Activated CD4-positive, alpha-beta T cell treated with anti-CD3 and anti-CD28 coated beads for 36 hours (primary cell): ENCODE measurements at regions of chr2 and their contacts with region 1.

Region 1: DNA sequence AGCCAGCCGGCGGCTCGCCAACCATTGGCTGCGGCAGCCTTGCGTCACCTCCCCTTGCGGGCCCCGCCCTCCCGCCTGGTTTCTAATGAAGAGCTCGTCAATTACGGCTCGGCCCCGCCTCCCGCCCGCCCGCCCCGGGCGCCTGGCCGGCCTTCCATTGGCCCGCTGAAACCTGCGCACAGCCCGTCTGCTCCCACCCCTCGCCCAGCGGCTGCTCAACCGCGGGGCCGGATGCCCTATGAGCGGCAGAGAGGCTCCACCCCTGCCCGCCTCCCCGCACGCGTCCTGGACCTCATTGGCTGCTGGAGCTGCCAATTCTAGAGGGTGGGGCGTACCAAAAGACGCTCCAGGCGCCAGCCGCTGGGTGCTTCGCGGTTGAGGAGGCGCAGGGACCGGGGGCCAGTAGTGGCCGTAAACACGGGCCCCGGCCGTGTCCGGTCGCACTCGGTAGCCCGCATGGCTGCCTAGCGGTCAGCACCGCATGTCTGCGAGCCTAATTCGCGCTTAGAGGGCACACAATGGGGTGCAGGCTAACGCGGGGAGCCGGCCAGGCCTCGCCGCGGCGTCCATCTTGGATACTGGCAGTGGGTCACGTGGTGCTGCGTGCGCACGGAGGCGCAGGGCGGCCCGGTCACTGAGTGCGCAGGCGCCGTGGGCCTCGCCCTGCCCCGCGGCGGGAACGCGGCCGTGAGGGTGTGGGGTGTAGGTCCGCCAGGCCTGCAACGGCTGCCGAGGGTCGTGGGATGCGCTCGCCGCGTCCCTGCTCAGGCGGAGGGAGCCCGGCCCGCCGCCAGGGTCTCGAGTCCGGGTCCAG is 454 bp upstream of the HDAC4 start:
- DNase-seq: peak; percentile 99
- ATAC-seq: peak; percentile 93
- H3K4me3 Mint-ChIP-seq: peak overlapping the region; percentile 88
- H3K27ac Mint-ChIP-seq: peak overlapping the region; percentile 97
- H3K4me1 Mint-ChIP-seq: peaks cover 41% of the 10 kb centered on the region
- H3K27me3 Mint-ChIP-seq: peaks cover 2% of the 10 kb centered on the region

Region 2: GRCh38 chr2:239143858-239144718 is 257.2 kb before region 1 on chr2:
- CTCF ChIA-PET with region 1: interaction called, 4 read pairs
- POLR2A ChIA-PET with region 1: no interaction called
- intact Hi-C with region 1: loop called (anchors 5 kb)
- DNase-seq: peak; percentile 53
- ATAC-seq: peak; percentile 65
- H3K4me3 Mint-ChIP-seq: no peak overlapping the region
- H3K27ac Mint-ChIP-seq: no peak overlapping the region
- H3K4me1 Mint-ChIP-seq: peaks cover 3% of the 10 kb centered on the region
- H3K27me3 Mint-ChIP-seq: no peaks in the 10 kb centered on the region

Region 3: DNA sequence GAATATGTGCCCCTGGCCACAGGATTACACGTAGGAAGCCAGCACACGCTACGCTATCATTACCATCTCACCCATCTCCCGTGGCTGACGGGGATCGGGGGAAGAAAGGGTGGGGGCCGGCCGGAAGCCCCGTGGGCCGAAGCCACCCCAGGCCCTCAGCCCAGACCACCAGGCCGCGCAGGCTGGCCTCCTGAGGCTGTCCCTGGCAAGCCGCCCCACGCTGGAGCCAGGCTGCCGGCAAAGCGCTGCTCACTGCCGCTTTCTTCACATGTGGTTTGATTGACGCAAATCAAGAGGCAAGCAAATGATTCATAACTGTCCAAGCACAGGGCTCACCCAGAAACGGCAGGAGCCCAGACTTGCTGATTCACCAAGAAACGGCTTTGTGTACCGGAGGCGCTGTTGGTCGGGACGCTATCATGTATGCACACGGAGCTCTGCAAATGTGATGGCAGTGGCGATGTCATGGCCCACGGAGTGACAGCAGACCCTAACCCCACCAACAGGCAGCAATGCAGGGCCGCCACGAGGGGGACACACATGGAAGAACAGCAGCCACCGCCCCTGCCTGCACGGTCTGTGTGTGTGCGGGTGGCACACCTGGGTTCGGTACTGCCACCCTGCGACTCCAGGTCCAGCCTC is 126.1 kb before region 1 on chr2:
- CTCF ChIA-PET with region 1: no interaction called
- POLR2A ChIA-PET with region 1: interaction called, 5 read pairs
- intact Hi-C with region 1: loop called in 1 of 2 experiments (anchors 1 kb)
- DNase-seq: peak; percentile 91
- ATAC-seq: peak; percentile 89
- H3K4me3 Mint-ChIP-seq: peak overlapping the region; percentile 53
- H3K27ac Mint-ChIP-seq: peak overlapping the region; percentile 83
- H3K4me1 Mint-ChIP-seq: peaks cover 46% of the 10 kb centered on the region
- H3K27me3 Mint-ChIP-seq: peaks cover 31% of the 10 kb centered on the region

Region 4: GRCh38 chr2:239358062-239358754 is 43.1 kb before region 1 on chr2:
- CTCF ChIA-PET with region 1: no interaction called
- POLR2A ChIA-PET with region 1: no interaction called
- intact Hi-C with region 1: no loop called
- DNase-seq: no peak
- ATAC-seq: no peak
- H3K4me3 Mint-ChIP-seq: no peak overlapping the region
- H3K27ac Mint-ChIP-seq: no peak overlapping the region
- H3K4me1 Mint-ChIP-seq: no peaks in the 10 kb centered on the region
- H3K27me3 Mint-ChIP-seq: no peaks in the 10 kb centered on the region

Region 5: DNA sequence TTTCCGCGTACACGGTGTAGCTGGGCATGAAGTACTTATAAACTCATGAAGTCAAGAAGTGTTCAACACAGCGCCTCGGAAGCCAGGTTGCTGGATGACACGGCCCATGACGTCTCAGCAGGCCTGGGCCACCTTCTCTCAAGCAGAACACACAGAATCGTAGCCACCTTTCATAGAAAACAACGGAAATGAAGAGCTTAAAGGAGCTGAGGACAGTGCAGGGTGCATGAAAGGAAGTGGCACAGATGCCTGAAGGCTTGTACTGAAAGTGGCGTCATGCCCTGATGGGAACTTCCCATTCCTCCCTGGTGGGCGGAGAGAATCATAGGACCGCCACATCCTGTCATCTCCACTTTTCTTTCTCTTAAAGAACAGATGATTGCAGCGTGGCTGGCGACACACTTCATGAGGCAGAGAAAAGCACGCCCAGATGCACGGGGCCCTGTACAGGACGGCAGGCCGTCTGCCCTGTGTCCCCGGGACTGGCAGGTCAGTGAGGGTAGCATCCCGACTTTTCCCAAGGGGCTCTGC is 31.6 kb before region 1 on chr2:
- CTCF ChIA-PET with region 1: interaction called, 3 read pairs
- POLR2A ChIA-PET with region 1: interaction called, 4 read pairs
- intact Hi-C with region 1: loop called (anchors 1 kb)
- DNase-seq: peak; percentile 91
- ATAC-seq: peak; percentile 97
- H3K4me3 Mint-ChIP-seq: peak overlapping the region; percentile 70
- H3K27ac Mint-ChIP-seq: peak overlapping the region; percentile 90
- H3K4me1 Mint-ChIP-seq: peaks cover 8% of the 10 kb centered on the region
- H3K27me3 Mint-ChIP-seq: no peaks in the 10 kb centered on the region

Region 6: GRCh38 chr2:239544143-239544917 is 143.1 kb after region 1 on chr2:
- CTCF ChIA-PET with region 1: no interaction called
- POLR2A ChIA-PET with region 1: no interaction called
- intact Hi-C with region 1: loop called in 1 of 2 experiments (anchors 1 kb)
- DNase-seq: peak; percentile 4
- ATAC-seq: no peak
- H3K4me3 Mint-ChIP-seq: no peak overlapping the region
- H3K27ac Mint-ChIP-seq: peak overlapping the region; percentile 83
- H3K4me1 Mint-ChIP-seq: peaks cover 50% of the 10 kb centered on the region
- H3K27me3 Mint-ChIP-seq: peaks cover 7% of the 10 kb centered on the region

Region 7: DNA sequence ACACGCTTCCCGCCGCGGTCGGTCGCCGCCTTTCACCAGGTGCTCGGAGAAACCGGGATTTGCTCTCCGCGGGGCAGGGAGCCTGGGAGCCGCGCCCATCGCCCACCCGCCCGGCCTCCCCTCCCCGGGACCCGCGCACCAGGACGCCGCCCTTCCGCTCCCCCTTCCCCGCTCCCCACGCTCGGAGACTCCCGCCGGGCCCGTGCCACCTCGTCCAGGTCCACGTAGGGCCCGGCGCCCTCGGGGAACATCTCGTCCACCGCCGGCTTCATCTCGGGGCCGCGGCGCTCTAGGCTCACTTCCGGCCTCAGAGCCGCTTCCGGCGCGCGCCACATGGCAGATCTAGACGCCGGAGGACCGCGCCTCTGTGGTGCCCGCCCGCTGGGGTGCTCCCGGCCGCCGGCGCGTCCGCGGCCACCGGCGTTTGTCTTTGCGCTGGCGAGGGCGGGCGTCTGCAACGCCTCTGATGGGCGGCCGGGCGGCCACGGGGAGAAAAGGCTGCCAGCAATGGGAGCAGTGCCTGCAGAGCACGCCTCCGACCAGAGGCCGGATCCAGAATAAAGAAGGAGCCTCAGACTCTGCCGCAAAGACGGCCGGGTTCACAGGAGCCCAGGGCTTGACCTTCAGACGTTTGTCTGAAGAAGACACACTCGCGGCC is 734.9 kb after region 1 on chr2 and contains the start of gene COPS9:
- CTCF ChIA-PET with region 1: no interaction called
- POLR2A ChIA-PET with region 1: no interaction called
- intact Hi-C with region 1: loop called in 1 of 2 experiments (anchors 1 kb)
- DNase-seq: peak; percentile 93
- ATAC-seq: peak; percentile 96
- H3K4me3 Mint-ChIP-seq: peak within 1 kb of the TSS; percentile 88
- H3K27ac Mint-ChIP-seq: peak within 1 kb of the TSS; percentile 91
- H3K4me1 Mint-ChIP-seq: peaks cover 25% of the 10 kb centered on the region
- H3K27me3 Mint-ChIP-seq: no peaks in the 10 kb centered on the region
- total RNA-seq, gene COPS9: 62.6 to 92.1 TPM